ENCODE measurements at regions of chr17 and their contacts with region 1.

Region 1: GRCh38 chr17:19857640-19858039 is 10.1 kb downstream of the ULK2 start:
- DNase-seq: no peak
- H3K27ac ChIP-seq: no peak overlapping the region
- CTCF ChIP-seq: no peak

Region 2: DNA sequence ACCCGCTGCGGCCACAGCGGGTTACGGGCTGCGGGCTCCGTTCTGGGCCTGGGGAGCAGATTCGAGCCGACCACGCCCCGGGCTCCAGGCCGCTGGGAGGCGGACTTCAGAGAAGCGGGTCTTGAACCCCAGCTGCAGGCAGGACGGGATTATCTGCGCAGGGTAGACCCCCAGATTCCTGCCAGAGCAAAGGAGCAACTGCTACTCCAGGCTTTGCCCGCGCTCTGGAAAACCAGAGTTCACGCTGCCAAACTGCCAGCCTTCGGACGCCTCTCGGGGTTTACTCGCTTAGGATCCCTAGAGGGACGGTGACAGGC is 10.4 kb after region 1 on chr17:
- CTCF ChIA-PET with region 1: no interaction called
- POLR2A ChIA-PET with region 1: no interaction called
- DNase-seq: no peak
- H3K27ac ChIP-seq: peak overlapping the region; percentile 67
- CTCF ChIP-seq: no peak

Region 3: GRCh38 chr17:19904924-19905323 is 47.3 kb after region 1 on chr17:
- CTCF ChIA-PET with region 1: no interaction called
- POLR2A ChIA-PET with region 1: interaction called, 12 read pairs
- DNase-seq: no peak
- H3K27ac ChIP-seq: no peak overlapping the region
- CTCF ChIP-seq: no peak

Region 4: DNA sequence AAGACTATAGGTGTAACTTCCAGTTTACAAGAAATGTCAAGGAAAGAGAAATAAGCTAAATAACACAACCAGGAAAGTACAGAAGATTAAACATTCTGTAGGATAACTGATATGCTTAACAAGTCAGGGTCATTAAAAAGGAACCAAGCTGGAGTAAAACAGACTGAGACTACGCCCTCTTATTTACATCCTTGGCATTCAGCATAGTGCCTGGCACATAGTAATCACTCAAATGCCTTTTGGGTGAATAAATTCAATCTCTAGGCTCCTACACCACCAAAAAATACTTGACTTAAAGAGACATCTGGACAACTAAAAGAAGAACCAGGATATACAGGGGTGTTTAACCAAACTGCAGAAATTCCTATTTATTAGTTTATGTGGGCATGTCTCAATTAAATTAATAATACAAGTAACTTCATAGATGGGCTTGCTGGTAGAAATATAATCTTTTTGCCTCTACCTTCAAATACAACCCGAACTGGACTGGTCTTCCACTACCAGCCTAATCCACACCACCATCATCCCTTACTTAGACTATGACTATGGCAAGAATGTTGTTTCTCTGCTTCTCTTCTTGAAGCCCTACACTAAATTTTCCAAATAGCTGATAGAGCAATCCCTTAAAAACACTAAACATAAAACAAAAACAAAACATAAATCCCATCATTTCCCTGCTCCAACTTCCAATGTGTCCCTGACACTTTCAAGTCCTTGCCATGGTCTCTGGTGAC is 57.8 kb after region 1 on chr17:
- CTCF ChIA-PET with region 1: no interaction called
- POLR2A ChIA-PET with region 1: no interaction called
- DNase-seq: no peak
- H3K27ac ChIP-seq: no peak overlapping the region
- CTCF ChIP-seq: no peak